Activated CD8-positive, alpha-beta T cell treated with anti-CD3 and anti-CD28 coated beads, Interleukin-2, amount 10 ng/mL, durations not matched to agents 7 days and 5 days (primary cell): ENCODE measurements at regions of chr10 and their contacts with region 1.

Region 1: DNA sequence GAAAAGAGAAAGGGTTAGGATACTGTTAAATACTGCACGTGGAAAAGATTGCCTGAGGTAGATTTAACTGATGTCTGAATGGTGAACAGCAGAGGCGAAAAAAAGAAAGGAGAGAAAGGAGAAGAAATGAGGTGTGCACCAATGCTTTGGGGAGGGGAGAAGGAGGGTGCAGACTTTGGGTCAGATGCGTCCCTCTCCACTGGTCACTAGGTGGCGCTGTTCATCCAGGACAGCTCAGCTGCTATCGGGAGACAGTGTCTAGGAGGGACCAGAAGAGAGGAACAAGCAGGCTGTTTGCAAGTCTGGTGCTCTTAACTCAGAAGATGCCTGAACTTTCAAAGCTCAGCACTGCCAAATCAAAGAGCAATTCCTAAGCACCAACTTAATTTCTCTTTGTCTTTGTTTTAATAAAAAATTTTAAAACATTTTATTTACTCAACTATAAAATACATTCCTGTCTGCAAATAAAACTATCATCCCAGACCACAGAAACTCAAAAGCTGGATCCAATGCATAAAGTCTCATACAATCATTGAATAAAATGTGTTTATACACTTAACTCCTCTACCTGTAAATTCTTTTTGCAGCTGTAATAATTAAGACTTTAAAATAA is 83.9 kb upstream of the PDLIM1 start:
- DNase-seq: peak; percentile 78
- ATAC-seq: peak; percentile 97
- H3K4me3 Mint-ChIP-seq: no peak overlapping the region
- H3K27ac Mint-ChIP-seq: no peak overlapping the region
- H3K4me1 Mint-ChIP-seq: no peaks in the 10 kb centered on the region
- H3K27me3 Mint-ChIP-seq: peaks cover 24% of the 10 kb centered on the region

Region 2: GRCh38 chr10:95246579-95247051 is 128.1 kb before region 1 on chr10:
- CTCF ChIA-PET with region 1: interaction called, 31 read pairs
- POLR2A ChIA-PET with region 1: no interaction called
- DNase-seq: peak; percentile 81
- ATAC-seq: peak; percentile 84
- H3K4me3 Mint-ChIP-seq: no peak overlapping the region
- H3K27ac Mint-ChIP-seq: no peak overlapping the region
- H3K4me1 Mint-ChIP-seq: peaks cover 17% of the 10 kb centered on the region
- H3K27me3 Mint-ChIP-seq: no peaks in the 10 kb centered on the region

Region 3: GRCh38 chr10:95363303-95363912 is 11.3 kb before region 1 on chr10:
- CTCF ChIA-PET with region 1: interaction called, 25 read pairs
- POLR2A ChIA-PET with region 1: no interaction called
- DNase-seq: peak; percentile 71
- ATAC-seq: peak; percentile 68
- H3K4me3 Mint-ChIP-seq: no peak overlapping the region
- H3K27ac Mint-ChIP-seq: no peak overlapping the region
- H3K4me1 Mint-ChIP-seq: no peaks in the 10 kb centered on the region
- H3K27me3 Mint-ChIP-seq: peaks cover 10% of the 10 kb centered on the region

Region 4: DNA sequence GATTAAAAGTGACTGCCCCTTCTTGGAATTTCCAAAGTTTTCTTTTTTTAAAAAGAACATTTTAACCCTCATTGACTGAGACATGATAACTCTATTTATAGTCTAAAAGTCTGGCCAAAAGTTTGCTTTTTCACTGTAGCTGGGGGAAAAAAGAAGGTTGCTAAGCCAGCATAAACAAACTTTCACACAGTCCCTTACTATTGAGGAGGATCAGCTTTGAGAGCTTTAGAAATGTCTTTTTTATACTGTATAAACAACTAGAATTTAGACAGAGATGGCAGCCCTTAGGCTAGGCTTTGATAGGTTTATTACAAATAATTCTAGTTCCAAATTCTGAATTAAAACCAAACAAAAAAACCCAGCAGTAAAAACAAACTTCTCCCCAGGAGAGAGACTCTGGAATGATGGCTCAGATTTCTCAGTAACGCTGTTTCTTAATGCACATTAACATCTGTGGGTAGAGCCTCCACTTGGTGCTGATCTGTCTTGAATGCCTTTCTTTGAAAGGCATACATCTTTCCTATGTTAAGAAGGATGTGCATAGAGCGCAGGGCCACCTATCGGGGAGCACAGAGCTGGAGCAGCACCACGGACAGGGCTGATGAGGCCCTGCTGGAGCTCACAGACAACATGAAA is 17.0 kb after region 1 on chr10:
- CTCF ChIA-PET with region 1: interaction called, 46 read pairs
- POLR2A ChIA-PET with region 1: no interaction called
- DNase-seq: no peak
- ATAC-seq: no peak
- H3K4me3 Mint-ChIP-seq: no peak overlapping the region
- H3K27ac Mint-ChIP-seq: no peak overlapping the region
- H3K4me1 Mint-ChIP-seq: peaks cover 8% of the 10 kb centered on the region
- H3K27me3 Mint-ChIP-seq: peaks cover 2% of the 10 kb centered on the region

Region 5: GRCh38 chr10:95430231-95430951 is 55.7 kb after region 1 on chr10:
- CTCF ChIA-PET with region 1: interaction called, 30 read pairs
- POLR2A ChIA-PET with region 1: no interaction called
- DNase-seq: peak; percentile 57
- ATAC-seq: peak; percentile 82
- H3K4me3 Mint-ChIP-seq: no peak overlapping the region
- H3K27ac Mint-ChIP-seq: no peak overlapping the region
- H3K4me1 Mint-ChIP-seq: no peaks in the 10 kb centered on the region
- H3K27me3 Mint-ChIP-seq: peaks cover 12% of the 10 kb centered on the region

Region 6: DNA sequence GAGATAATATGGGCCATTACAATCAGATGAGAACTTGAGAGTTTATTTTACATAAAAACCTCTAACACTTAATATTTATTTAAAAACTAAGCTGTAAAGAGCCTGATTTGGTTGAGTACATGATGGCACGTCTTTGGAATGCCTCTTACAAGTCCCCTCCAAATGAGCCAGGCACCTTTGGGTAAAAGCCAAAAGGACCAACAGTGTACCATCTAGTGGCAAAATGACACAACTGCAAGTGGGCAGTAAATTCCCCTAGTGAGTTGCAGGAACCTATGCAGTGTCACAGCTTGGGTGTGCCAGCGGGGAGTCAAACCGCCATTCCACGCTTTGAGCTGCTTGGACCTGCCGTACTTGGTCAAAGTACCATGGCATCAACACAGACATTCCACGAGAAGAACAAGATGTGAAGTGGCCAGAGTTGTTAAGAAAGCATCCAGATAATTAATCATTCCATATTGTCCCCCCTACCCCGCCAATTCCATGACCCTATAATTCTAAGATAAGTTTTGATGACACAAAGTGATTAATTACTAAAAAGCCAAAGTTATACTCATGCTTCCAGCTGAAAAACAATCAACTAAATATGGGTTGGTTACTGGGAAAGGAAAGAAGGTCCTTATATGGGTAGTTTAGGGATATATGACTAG is 71.3 kb after region 1 on chr10:
- CTCF ChIA-PET with region 1: interaction called, 42 read pairs
- POLR2A ChIA-PET with region 1: no interaction called
- DNase-seq: peak; percentile 49
- ATAC-seq: peak; percentile 70
- H3K4me3 Mint-ChIP-seq: no peak overlapping the region
- H3K27ac Mint-ChIP-seq: no peak overlapping the region
- H3K4me1 Mint-ChIP-seq: peaks cover 7% of the 10 kb centered on the region
- H3K27me3 Mint-ChIP-seq: peaks cover 33% of the 10 kb centered on the region

Region 7: DNA sequence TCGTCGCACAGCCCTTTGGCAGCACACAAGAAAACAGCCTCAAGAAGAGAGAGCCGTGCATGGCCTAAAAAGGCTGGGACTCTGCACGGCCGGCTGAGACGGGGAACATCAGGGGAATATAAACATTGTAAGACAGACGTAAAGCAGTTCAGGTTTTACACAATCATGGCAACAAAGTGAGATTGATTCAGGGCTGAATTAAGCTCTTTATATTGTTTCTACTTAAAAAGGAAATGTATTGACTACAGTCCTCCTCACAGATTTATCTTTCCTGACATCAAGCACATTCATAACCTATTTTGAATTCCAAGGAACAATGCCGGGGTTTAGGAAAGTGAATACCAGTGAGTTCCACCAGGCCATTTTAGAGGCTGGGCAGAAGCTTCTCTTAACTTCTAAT is 161.3 kb after region 1 on chr10:
- CTCF ChIA-PET with region 1: no interaction called
- POLR2A ChIA-PET with region 1: no interaction called
- DNase-seq: no peak
- ATAC-seq: no peak
- H3K4me3 Mint-ChIP-seq: no peak overlapping the region
- H3K27ac Mint-ChIP-seq: no peak overlapping the region
- H3K4me1 Mint-ChIP-seq: no peaks in the 10 kb centered on the region
- H3K27me3 Mint-ChIP-seq: no peaks in the 10 kb centered on the region

Region 8: GRCh38 chr10:95601116-95601719 is 226.5 kb after region 1 on chr10:
- CTCF ChIA-PET with region 1: interaction called, 25 read pairs
- POLR2A ChIA-PET with region 1: no interaction called
- DNase-seq: peak; percentile 57
- ATAC-seq: peak; percentile 69
- H3K4me3 Mint-ChIP-seq: no peak overlapping the region
- H3K27ac Mint-ChIP-seq: no peak overlapping the region
- H3K4me1 Mint-ChIP-seq: no peaks in the 10 kb centered on the region
- H3K27me3 Mint-ChIP-seq: peaks cover 12% of the 10 kb centered on the region